ENCODE measurements at regions of chr20 and their contacts with region 1.

Region 1: DNA sequence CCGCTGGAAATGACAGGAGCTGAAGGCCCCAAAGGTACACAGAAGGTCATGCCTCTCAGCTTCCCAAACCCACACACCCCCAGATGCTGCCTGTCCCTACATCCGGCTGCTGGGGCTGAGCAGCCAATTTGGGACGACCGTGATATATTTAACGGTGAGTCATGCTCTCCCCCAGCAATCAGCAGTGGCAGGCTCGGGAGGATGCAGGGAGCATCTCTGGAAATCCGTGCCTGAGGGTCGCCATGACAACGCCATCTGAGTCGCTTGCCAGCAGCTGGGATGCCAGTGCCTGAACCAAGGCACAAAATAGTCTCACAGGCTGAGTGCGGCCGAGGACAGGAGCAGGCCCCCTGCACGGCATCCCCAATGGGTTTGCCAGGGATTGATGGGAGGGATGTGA is 57.9 kb downstream of the KCNB1 start:
- DNase-seq: no peak
- ATAC-seq: no peak
- H3K4me3 ChIP-seq: no peak overlapping the region
- H3K27ac ChIP-seq: no peak overlapping the region
- H3K4me1 ChIP-seq: no peaks in the 10 kb centered on the region
- CTCF ChIP-seq: no peak
- EP300 ChIP-seq: no peak
- POLR2A ChIP-seq: no peak
- RAD21 ChIP-seq: no peak

Region 2: DNA sequence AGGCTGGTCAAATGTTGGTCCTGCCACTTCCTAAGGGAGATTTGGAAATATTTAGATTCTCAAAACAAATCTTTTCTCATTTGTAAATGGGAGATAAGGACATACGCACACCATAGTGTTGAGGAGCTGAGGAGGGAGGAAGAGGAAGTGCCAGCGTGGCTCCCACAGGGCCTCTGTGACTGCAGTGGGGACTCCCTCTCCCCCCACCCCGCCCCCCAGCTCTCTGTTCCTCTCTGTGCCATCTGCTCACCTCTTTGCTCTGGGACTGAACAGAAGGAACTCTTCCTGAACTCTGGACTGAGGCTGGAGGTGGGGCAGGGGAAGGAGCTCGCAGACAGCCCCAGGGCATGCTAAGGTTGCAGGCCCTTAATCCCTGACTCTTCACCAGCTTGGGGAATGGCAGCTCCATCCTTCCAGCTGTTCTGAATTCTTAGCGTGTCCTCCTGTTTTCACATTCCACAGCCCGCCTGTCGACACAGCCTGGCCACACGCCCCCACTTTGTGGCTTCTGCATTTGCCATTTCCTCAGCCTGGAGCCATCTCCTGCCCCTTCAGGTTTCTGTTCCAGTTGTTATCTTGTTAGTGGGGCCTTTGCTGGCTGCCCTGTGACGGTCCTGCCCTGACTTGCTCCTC is 193.9 kb before region 1 on chr20:
- CTCF ChIA-PET with region 1: no interaction called
- POLR2A ChIA-PET with region 1: no interaction called
- DNase-seq: no peak
- ATAC-seq: no peak
- H3K4me3 ChIP-seq: no peak overlapping the region
- H3K27ac ChIP-seq: no peak overlapping the region
- H3K4me1 ChIP-seq: no peaks in the 10 kb centered on the region
- CTCF ChIP-seq: no peak
- EP300 ChIP-seq: no peak
- POLR2A ChIP-seq: no peak
- RAD21 ChIP-seq: no peak

Region 3: GRCh38 chr20:49411221-49411925 is 13.2 kb before region 1 on chr20:
- CTCF ChIA-PET with region 1: interaction called, 10 read pairs
- POLR2A ChIA-PET with region 1: no interaction called
- DNase-seq: no peak
- ATAC-seq: no peak
- H3K4me3 ChIP-seq: no peak overlapping the region
- H3K27ac ChIP-seq: no peak overlapping the region
- H3K4me1 ChIP-seq: no peaks in the 10 kb centered on the region
- CTCF ChIP-seq: no peak
- EP300 ChIP-seq: no peak
- POLR2A ChIP-seq: no peak
- RAD21 ChIP-seq: no peak

Measured in A549 (cell line).